ENCODE measurements at regions of chr6 and their contacts with region 1.

Region 1: DNA sequence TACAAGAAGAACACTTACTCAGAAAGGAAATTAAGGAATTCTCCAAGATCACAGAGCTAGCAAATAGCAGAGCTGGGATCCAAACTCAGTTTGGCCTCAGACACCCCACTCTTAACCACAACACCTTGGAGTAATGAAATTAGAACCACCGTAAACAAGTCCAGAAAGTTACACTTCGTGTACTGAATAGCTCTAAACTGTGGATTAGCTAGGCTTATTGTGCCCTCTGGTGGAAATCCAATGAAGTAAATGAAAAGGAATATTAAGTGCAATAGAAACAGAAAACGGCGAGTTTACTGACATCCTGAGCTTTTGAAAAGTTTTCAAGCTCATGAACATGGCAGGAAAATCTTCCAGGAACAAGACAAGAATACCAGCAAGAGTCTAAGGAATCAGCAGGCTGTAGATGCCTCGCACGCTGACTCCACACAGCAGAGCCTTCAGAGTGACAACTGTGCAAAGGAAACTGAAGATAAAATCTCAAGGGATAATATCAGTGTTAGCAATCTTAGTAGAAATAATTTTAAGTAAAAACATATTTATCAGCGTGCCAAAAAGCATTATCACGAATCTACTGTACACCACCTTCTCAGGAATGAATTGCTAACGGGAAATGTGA is 34.6 kb downstream of the FBXO5 start:
- DNase-seq: no peak
- H3K4me3 ChIP-seq: peak overlapping the region in 2 of 3 donors; percentile 17 to 51
- H3K27ac ChIP-seq: no peak overlapping the region
- H3K4me1 ChIP-seq: no peaks in the 10 kb centered on the region
- H3K27me3 ChIP-seq: no peaks in the 10 kb centered on the region
- CTCF ChIP-seq: peak in 2 of 3 donors; percentile 46 to 47
- POLR2A ChIP-seq: no peak

Region 2: GRCh38 chr6:152218880-152219279 is 729.4 kb before region 1 on chr6:
- intact Hi-C with region 1: loop called (anchors 10 kb)
- DNase-seq: no peak
- H3K4me3 ChIP-seq: no peak overlapping the region
- H3K27ac ChIP-seq: no peak overlapping the region
- H3K4me1 ChIP-seq: no peaks in the 10 kb centered on the region
- H3K27me3 ChIP-seq: no peaks in the 10 kb centered on the region
- CTCF ChIP-seq: no peak
- POLR2A ChIP-seq: no peak